ENCODE measurements at regions of chr4 and their contacts with region 1.

Region 1: DNA sequence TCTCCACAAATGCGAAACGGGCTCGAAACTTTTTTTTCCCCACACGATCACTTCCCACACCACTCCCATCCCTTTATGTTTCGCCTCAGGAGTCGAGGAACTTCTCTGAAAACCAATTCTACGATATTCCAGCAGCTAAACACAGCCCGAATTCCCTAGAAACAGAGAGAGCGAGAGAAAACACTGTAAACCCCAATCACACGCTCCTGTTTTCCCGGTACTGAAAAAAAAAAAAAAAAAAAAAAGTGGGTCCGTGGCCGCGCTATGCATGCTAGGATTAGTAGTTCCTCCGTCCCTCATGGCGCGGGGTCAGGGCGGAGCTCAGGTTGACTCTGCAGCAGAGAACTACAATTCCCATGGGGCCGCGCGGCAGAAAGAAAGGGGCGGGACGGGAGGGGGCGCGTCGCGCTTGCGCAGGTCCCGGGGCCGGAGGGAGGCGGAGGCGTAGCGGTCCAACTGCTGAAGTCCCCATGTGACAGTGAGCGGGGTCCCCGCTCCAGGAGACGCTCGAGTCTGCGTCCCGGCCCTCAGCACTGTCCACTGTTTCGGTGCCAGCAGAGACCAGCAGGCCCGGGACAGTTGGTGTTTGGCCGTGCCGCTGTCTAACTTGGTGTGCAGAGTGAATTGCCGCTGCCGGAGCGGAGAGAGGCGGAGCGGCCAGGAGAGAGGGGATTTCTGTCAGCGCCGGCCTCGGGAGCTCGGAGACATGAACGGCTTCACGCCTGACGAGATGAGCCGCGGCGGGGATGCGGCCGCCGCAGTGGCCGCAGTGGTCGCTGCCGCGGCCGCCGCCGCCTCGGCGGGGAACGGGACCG is at the start of gene SAP30:
- DNase-seq: peak; percentile 89
- H3K4me3 ChIP-seq: peak within 1 kb of the TSS; percentile 88
- H3K27me3 ChIP-seq: no peaks in the 10 kb centered on the region
- CTCF ChIP-seq: no peak
- polyA plus RNA-seq, gene SAP30: 3.7 and 8.9 TPM in 2 replicates

Region 2: GRCh38 chr4:173334085-173334772 is 36.5 kb before region 1 on chr4 and contains the start of gene HMGB2:
- CTCF ChIA-PET with region 1: interaction called, 3 read pairs
- POLR2A ChIA-PET with region 1: interaction called, 19 read pairs
- DNase-seq: peak; percentile 100
- H3K4me3 ChIP-seq: peak within 1 kb of the TSS; percentile 100
- H3K27me3 ChIP-seq: no peaks in the 10 kb centered on the region
- CTCF ChIP-seq: no peak
- polyA plus RNA-seq, gene HMGB2: 32.7 and 68.5 TPM in 2 replicates

Region 3: DNA sequence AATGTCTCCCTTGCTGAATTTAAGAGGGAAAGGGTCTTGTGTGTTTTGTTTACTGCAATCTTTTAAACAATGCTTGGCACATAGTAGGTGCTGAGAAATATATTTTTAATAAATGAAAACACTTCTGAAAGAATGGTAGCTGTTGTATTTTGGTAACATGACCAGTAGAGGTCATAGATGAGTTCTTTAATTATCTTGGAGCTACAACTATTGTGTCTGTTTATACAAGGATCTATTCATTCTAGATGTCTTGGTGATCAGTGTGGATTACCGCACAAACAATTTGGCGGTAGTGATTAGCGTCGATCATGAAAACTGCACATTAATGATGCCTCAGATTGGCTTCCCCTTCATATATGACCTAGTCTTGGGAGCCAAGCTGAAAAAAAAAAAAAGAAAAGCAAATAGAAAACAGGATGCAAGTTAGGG is 49.7 kb after region 1 on chr4:
- CTCF ChIA-PET with region 1: interaction called, 11 read pairs
- POLR2A ChIA-PET with region 1: interaction called, 21 read pairs
- DNase-seq: no peak
- H3K4me3 ChIP-seq: no peak overlapping the region
- H3K27me3 ChIP-seq: no peaks in the 10 kb centered on the region
- CTCF ChIP-seq: peak; percentile 38